Activated T-helper 1 cell treated with anti-CD3 and anti-CD28 coated beads, Interleukin-12 subunit alpha, Interleukin-12 subunit beta, Interleukin-2, Interleukin-4 antibody, amounts not matched to agents 30 ng/mL and 10 ng/mL and 1 ng/mL, durations not matched to agents 14 hours and 24 hours and 36 hours (primary cell): ENCODE measurements at regions of chr2 and their contacts with region 1.

Region 1: GRCh38 chr2:197804049-197804757 is at the start of gene PLCL1:
- DNase-seq: peak; percentile 88
- H3K4me3 Mint-ChIP-seq: peak within 1 kb of the TSS; percentile 92
- H3K27ac Mint-ChIP-seq: no peak within 1 kb of the TSS
- H3K4me1 Mint-ChIP-seq: peaks cover 34% of the 10 kb centered on the region
- H3K27me3 Mint-ChIP-seq: peaks cover 29% of the 10 kb centered on the region
- total RNA-seq, gene PLCL1: 0.62 and 0.78 TPM in 2 replicates

Region 2: DNA sequence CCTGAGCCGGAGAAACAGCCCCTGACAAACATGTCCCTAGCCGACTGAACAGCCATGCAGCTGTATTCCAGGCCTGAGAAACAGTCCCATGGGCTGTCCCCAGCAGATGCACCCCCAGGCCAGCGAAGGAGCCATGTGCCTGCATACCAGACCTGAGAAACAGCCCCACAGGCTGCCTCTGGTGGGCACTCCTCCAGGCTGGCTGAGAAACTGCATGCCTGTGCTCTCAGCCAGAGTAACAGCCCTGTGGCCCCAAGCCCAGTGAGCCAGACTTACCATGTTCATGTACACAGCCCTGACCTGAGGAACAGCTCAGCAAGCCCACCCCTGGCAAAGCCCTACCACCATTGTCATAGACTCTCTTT is 43.9 kb before region 1 on chr2:
- intact Hi-C with region 1: no loop called
- DNase-seq: no peak
- H3K4me3 Mint-ChIP-seq: no peak overlapping the region
- H3K27ac Mint-ChIP-seq: no peak overlapping the region
- H3K4me1 Mint-ChIP-seq: no peaks in the 10 kb centered on the region
- H3K27me3 Mint-ChIP-seq: peaks cover 11% of the 10 kb centered on the region

Region 3: GRCh38 chr2:197838036-197838435 is 33.8 kb after region 1 on chr2:
- intact Hi-C with region 1: loop called (anchors 1 kb)
- DNase-seq: peak; percentile 11
- H3K4me3 Mint-ChIP-seq: peak overlapping the region; percentile 54
- H3K27ac Mint-ChIP-seq: peak overlapping the region; percentile 76
- H3K4me1 Mint-ChIP-seq: peaks cover 42% of the 10 kb centered on the region
- H3K27me3 Mint-ChIP-seq: peaks cover 3% of the 10 kb centered on the region

Region 4: GRCh38 chr2:197904446-197904845 is 100.2 kb after region 1 on chr2:
- intact Hi-C with region 1: loop called (anchors 1 kb)
- DNase-seq: peak; percentile 6
- H3K4me3 Mint-ChIP-seq: no peak overlapping the region
- H3K27ac Mint-ChIP-seq: no peak overlapping the region
- H3K4me1 Mint-ChIP-seq: peaks cover 5% of the 10 kb centered on the region
- H3K27me3 Mint-ChIP-seq: peaks cover 35% of the 10 kb centered on the region

Region 5: GRCh38 chr2:197952540-197953202 is 148.5 kb after region 1 on chr2:
- intact Hi-C with region 1: loop called (anchors 5 kb)
- DNase-seq: no peak
- H3K4me3 Mint-ChIP-seq: no peak overlapping the region
- H3K27ac Mint-ChIP-seq: no peak overlapping the region
- H3K4me1 Mint-ChIP-seq: peaks cover 9% of the 10 kb centered on the region
- H3K27me3 Mint-ChIP-seq: no peaks in the 10 kb centered on the region

Region 6: GRCh38 chr2:197972061-197972460 is 167.9 kb after region 1 on chr2:
- intact Hi-C with region 1: no loop called
- DNase-seq: no peak
- H3K4me3 Mint-ChIP-seq: no peak overlapping the region
- H3K27ac Mint-ChIP-seq: no peak overlapping the region
- H3K4me1 Mint-ChIP-seq: no peaks in the 10 kb centered on the region
- H3K27me3 Mint-ChIP-seq: no peaks in the 10 kb centered on the region

Region 7: DNA sequence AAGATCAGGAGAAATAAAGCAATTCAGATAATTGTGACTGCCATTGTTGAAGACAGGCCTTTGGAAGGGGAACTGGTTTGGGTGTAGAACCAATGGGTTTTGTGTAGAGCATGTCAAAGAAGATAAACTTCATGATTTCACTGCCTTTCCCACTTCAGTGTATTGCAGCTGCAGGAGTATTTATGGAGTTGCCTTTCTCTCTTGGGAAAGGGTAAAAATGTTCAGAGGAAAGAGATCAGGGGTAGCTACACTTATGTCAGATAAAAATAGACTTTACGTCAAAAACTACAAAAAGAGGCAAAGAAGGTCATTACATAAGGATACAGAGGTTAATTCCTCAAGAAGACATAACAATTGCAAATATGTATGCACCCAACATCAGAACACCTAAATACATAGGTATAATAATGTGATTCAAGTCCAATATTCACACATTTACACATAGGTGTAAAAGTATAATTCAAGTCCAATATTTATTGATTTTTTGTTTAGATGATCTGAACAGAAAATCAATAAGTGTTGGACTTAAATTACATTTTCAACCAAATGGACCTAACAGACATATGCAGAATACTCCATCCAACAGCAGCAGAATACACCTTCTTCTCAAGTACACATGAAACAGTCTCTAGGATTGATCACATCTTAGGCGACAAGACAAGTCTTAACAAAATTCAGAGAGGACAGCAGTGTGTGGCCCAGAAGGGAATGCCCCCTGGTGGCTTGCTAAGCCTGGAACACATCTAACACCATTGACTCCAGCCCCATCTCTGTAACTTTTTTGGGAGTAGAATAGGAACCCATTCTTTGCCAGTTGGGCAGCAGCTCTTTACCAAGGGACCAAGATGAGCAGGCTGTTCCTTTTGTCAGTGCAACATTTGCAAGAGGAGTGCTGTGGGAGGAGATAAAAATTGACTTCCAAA is 249.8 kb after region 1 on chr2:
- intact Hi-C with region 1: loop called (anchors 1 kb)
- DNase-seq: peak; percentile 10
- H3K4me3 Mint-ChIP-seq: no peak overlapping the region
- H3K27ac Mint-ChIP-seq: no peak overlapping the region
- H3K4me1 Mint-ChIP-seq: no peaks in the 10 kb centered on the region
- H3K27me3 Mint-ChIP-seq: peaks cover 3% of the 10 kb centered on the region

Region 8: GRCh38 chr2:198296665-198297308 is 492.6 kb after region 1 on chr2:
- intact Hi-C with region 1: loop called (anchors 1 kb)
- DNase-seq: peak; percentile 20
- H3K4me3 Mint-ChIP-seq: no peak overlapping the region
- H3K27ac Mint-ChIP-seq: no peak overlapping the region
- H3K4me1 Mint-ChIP-seq: no peaks in the 10 kb centered on the region
- H3K27me3 Mint-ChIP-seq: peaks cover 20% of the 10 kb centered on the region

Region 9: GRCh38 chr2:198782734-198783133 is 978.5 kb after region 1 on chr2:
- intact Hi-C with region 1: no loop called
- DNase-seq: no peak
- H3K4me3 Mint-ChIP-seq: no peak overlapping the region
- H3K27ac Mint-ChIP-seq: no peak overlapping the region
- H3K4me1 Mint-ChIP-seq: no peaks in the 10 kb centered on the region
- H3K27me3 Mint-ChIP-seq: no peaks in the 10 kb centered on the region